ENCODE measurements at regions of chr13 and their contacts with region 1.

Region 1: GRCh38 chr13:106536244-106537034 is 977 bp upstream of the EFNB2 start:
- DNase-seq: peak; percentile 82 to 99 (median 95)

Region 2: DNA sequence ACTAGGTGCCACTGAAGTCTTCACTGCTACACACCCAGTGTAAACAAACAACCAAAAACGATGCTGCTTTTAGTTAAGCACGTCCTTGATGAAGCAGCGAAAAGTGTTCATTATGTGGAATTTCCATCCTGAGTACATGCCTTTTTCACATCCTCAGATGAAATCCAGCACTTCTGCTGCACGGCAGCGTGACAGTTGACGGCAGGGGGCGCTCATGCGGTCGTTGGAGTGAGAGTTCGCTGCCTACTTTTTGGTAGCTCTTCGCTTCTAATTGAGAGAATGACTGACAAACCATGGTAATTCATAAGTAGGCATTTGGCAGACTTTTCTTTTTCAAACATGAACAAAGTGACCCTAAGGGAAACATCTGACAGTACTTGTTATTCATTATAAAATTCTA is 1125.8 kb before region 1 on chr13:
- intact Hi-C with region 1: loop called (anchors 10 kb)
- DNase-seq: peak; percentile 19 to 92 (median 74)

Region 3: GRCh38 chr13:106088085-106088484 is 448.4 kb before region 1 on chr13:
- intact Hi-C with region 1: loop called (anchors 5 kb)
- DNase-seq: no peak

Region 4: DNA sequence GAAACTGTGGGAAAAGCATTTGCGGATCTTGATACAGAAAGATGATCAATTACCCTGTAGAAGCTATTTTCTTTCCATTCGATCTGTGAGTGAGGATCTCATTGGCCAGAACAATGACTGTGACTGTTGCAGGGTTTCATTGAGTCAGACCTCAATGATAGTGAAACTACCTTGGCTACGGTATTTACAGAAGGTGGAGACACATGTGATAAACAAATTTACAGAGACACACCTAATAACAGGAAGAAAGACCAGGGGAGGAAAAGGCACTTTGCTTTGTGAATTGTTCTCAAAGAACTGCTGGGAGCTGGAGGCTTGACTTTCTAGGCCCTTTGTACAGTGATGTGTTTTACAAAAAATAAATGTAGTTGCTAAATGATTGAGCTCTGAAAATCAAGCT is 51.3 kb after region 1 on chr13:
- intact Hi-C with region 1: no loop called
- DNase-seq: no peak

Region 5: DNA sequence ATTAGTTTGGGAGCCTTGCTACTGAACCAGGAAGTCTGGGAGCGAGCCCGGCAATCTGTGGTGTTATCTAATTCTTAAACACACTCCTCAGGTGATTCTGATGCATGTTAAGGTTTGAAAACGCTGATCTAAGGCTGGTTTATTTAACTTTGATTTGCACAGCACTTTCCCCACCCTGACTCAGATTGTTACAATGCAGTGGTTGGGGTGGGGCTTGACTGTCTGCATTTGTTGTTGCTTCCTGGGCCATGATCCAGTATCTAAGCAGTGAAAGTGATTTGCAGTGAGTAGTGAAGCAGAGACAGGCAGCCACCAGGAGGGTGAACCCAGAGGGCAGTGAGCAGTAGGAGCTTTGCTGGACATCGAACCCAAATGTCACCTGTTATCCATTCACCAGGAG is 113.1 kb after region 1 on chr13:
- intact Hi-C with region 1: no loop called
- DNase-seq: no peak

Region 6: GRCh38 chr13:106917673-106918556 is 381.5 kb after region 1 on chr13:
- intact Hi-C with region 1: loop called (anchors 10 kb)
- DNase-seq: peak; percentile 56 to 93 (median 86)

Measured in head of caudate nucleus (tissue), 42 donors.